ENCODE measurements at regions of chr1 and their contacts with region 1.

Region 1: GRCh38 chr1:109790735-109791494 is 27.2 kb upstream of the EPS8L3 start:
- DNase-seq: peak; percentile 33
- H3K4me3 ChIP-seq: no peak overlapping the region
- H3K27ac ChIP-seq: no peak overlapping the region
- H3K4me1 ChIP-seq: peaks cover 37% of the 10 kb centered on the region
- H3K27me3 ChIP-seq: no peaks in the 10 kb centered on the region
- CTCF ChIP-seq: peak; percentile 34; the same call in 1 of the 2 replicates

Region 2: GRCh38 chr1:109876617-109877319 is 85.9 kb after region 1 on chr1:
- CTCF ChIA-PET with region 1: interaction called, 13 read pairs
- POLR2A ChIA-PET with region 1: no interaction called
- intact Hi-C with region 1: no loop called
- DNase-seq: no peak
- H3K4me3 ChIP-seq: no peak overlapping the region
- H3K27ac ChIP-seq: no peak overlapping the region
- H3K4me1 ChIP-seq: no peaks in the 10 kb centered on the region
- H3K27me3 ChIP-seq: no peaks in the 10 kb centered on the region
- CTCF ChIP-seq: no peak

Region 3: DNA sequence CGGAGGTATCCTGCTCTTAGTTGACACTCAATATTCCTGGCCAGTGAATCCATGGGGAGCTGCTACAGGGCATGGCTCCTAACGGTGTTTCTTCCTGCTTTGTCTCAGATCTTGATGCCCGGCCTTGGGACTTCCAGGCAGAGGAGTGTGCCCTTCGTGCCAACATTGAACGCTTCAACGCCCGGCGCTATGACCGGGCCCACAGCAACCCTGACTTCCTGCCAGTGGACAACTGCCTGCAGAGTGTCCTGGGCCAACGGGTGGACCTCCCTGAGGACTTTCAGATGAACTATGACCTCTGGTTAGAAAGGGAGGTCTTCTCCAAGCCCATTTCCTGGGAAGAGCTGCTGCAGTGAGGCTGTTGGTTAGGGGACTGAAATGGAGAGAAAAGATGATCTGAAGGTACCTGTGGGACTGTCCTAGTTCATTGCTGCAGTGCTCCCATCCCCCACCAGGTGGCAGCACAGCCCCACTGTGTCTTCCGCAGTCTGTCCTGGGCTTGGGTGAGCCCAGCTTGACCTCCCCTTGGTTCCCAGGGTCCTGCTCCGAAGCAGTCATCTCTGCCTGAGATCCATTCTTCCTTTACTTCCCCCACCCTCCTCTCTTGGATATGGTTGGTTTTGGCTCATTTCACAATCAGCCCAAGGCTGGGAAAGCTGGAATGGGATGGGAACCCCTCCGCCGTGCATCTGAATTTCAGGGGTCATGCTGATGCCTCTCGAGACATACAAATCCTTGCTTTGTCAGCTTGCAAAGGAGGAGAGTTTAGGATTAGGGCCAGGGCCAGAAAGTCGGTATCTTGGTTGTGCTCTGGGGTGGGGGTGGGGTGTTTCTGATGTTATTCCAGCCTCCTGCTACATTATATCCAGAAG is 262.9 kb after region 1 on chr1:
- CTCF ChIA-PET with region 1: no interaction called
- POLR2A ChIA-PET with region 1: no interaction called
- intact Hi-C with region 1: no loop called
- DNase-seq: peak; percentile 56
- H3K4me3 ChIP-seq: no peak overlapping the region
- H3K27ac ChIP-seq: no peak overlapping the region
- H3K4me1 ChIP-seq: no peaks in the 10 kb centered on the region
- H3K27me3 ChIP-seq: no peaks in the 10 kb centered on the region
- CTCF ChIP-seq: peak; percentile 96

Measured in A673 (cell line).